Naive thymus-derived CD8-positive, alpha-beta T cell (primary cell): ENCODE measurements at regions of chr16 and their contacts with region 1.

Region 1: GRCh38 chr16:74666425-74667254 is at the start of gene RFWD3:
- DNase-seq: peak; percentile 84 to 99 (median 97)
- ATAC-seq: peak; percentile 99
- H3K4me3 Mint-ChIP-seq: peak within 1 kb of the TSS; percentile 84 to 99 (median 91)
- H3K27ac Mint-ChIP-seq: peak within 1 kb of the TSS; percentile 89 to 98 (median 96)
- H3K4me1 Mint-ChIP-seq: peaks cover 22 to 49% (median 35%) of the 10 kb centered on the region in 4 donors
- H3K27me3 Mint-ChIP-seq: peaks cover 0 to 2% (median 0%) of the 10 kb centered on the region in 5 donors
- polyA plus RNA-seq, gene RFWD3: 11.3 to 22.6 (median 11.7) TPM

Region 2: DNA sequence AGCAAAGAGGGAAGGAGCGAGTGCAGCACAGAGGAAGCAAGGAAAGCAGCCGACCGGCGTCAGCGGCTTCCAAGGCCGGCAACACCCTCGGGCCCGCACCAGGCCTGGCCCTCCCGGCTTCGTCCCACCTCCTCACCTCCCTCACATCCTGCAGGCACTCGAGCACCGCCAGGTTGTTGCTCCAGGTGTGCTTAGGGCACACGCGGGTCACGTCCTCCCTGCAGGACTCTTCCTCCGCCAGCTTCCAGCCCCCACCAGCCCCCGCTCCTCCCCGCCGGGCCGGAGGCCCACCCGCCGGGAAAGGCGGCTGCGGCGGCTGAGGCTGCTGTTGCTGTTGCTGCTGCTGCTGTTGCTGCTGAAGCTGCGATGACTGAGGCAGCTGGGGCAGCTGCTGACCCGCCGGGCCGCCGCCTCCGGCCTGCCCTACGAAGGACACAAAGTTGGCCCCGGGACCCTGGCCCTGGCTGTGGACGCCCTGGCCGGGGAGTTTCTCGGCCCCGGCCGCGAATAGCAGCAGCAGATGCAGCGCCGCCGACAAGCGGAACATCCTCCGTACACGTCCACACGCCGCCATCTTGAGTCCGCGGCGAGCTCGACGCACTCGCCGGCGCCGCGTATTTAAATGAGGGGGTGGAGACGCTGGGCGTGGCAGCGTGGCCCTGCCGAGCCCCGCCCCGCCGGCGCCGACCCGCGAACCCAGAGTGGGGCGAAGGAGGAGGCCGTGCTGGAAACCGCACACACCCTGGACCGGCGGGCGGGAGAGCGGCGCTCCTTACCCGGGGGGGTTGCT is 59.9 kb before region 1 on chr16 and contains the start of gene GLG1:
- POLR2A ChIA-PET with region 1: interaction called, 20 read pairs
- DNase-seq: peak; percentile 81 to 93 (median 90)
- ATAC-seq: peak; percentile 86 to 90
- H3K4me3 Mint-ChIP-seq: peak within 1 kb of the TSS; percentile 86 to 99 (median 94)
- H3K27ac Mint-ChIP-seq: peak within 1 kb of the TSS; percentile 90 to 99 (median 96)
- H3K4me1 Mint-ChIP-seq: peaks cover 31 to 71% (median 66%) of the 10 kb centered on the region in 4 donors
- H3K27me3 Mint-ChIP-seq: no peaks in the 10 kb centered on the region
- polyA plus RNA-seq, gene GLG1: 137 to 210 (median 164) TPM

Region 3: GRCh38 chr16:74649839-74650504 is 16.7 kb before region 1 on chr16:
- POLR2A ChIA-PET with region 1: no interaction called
- DNase-seq: no peak
- ATAC-seq: no peak
- H3K4me3 Mint-ChIP-seq: no peak overlapping the region
- H3K27ac Mint-ChIP-seq: peak overlapping the region in 2 of 10 donors; percentile 8 to 81
- H3K4me1 Mint-ChIP-seq: peaks cover 9 to 30% (median 23%) of the 10 kb centered on the region in 4 donors
- H3K27me3 Mint-ChIP-seq: no peaks in the 10 kb centered on the region

Region 4: GRCh38 chr16:74700438-74701225 is 34.0 kb after region 1 on chr16 and contains the start of gene MLKL:
- POLR2A ChIA-PET with region 1: interaction called, 32 read pairs
- DNase-seq: peak; percentile 29 to 69 (median 46)
- ATAC-seq: peak; percentile 86
- H3K4me3 Mint-ChIP-seq: peak within 1 kb of the TSS; percentile 90 to 100 (median 98)
- H3K27ac Mint-ChIP-seq: peak within 1 kb of the TSS; percentile 93 to 99 (median 98)
- H3K4me1 Mint-ChIP-seq: peaks cover 21 to 63% (median 54%) of the 10 kb centered on the region in 4 donors
- H3K27me3 Mint-ChIP-seq: no peaks in the 10 kb centered on the region
- polyA plus RNA-seq, gene MLKL: 7.3 to 9.3 (median 8.2) TPM